HEK293T (cell line): ENCODE measurements at regions of chr19 and their contacts with region 1.

Region 1: GRCh38 chr19:55503502-55504251 is 15.4 kb downstream of the SSC5D start:
- DNase-seq: peak; percentile 99

Region 2: GRCh38 chr19:55467236-55468053 is 36.2 kb before region 1 on chr19:
- CTCF ChIA-PET with region 1: interaction called, 24 read pairs
- POLR2A ChIA-PET with region 1: no interaction called
- DNase-seq: peak; percentile 72

Region 3: DNA sequence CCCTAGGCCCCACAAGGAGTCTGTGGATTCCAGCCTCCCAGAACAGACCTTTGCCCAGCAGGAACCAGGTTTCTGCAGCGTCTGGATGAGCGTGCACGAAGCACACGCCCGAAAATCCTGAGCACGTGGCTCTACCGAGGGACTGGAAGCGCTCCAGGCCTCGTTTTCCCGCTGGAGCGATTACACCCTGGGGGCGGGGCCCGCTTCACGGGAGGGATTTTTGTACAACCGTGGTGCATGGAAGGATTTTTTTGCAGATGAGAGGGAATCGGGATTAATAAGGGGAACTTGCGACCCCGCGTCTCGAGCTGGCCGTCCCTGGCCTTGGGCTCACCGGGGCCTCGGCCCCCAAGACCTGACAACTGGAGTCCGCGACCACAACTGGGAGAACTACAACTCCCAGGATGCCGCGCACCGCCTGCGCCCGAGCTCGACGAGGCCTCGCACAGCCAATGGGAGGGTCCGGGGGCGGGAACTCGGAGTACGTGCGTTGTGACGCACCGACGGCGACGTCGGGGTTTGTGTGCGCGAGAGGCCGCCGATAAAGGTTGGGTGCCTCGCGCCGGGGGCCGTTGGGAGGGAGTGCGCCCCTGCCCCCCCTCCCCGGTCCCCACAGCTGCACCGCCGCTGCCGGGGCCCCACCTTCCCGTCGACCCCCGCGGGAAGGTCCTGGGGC is 27.4 kb before region 1 on chr19 and contains the start of gene ZNF628:
- CTCF ChIA-PET with region 1: interaction called, 5 read pairs
- POLR2A ChIA-PET with region 1: interaction called, 11 read pairs
- DNase-seq: peak; percentile 95

Region 4: DNA sequence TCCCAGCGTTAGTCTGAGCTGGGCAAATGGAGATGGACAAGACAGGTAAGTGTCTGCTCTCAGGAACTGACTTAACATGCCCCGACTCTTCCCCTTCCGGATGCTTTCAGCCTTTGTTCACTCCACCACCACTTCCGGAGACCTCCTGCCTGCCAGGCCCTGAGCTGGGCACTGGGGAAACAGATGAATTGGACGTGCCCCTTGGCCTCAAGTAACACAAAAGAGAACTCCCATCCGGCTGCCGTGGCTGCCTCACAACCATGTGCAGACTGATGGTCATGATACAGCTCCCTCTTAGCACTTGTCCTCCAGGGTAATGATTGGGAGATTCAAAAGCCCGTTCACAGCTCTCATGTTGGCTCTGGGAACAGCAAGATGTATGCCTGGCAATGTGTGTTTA is 113.7 kb after region 1 on chr19:
- CTCF ChIA-PET with region 1: no interaction called
- POLR2A ChIA-PET with region 1: no interaction called
- DNase-seq: no peak